B cell (primary cell): ENCODE measurements at regions of chr9 and their contacts with region 1.

Region 1: DNA sequence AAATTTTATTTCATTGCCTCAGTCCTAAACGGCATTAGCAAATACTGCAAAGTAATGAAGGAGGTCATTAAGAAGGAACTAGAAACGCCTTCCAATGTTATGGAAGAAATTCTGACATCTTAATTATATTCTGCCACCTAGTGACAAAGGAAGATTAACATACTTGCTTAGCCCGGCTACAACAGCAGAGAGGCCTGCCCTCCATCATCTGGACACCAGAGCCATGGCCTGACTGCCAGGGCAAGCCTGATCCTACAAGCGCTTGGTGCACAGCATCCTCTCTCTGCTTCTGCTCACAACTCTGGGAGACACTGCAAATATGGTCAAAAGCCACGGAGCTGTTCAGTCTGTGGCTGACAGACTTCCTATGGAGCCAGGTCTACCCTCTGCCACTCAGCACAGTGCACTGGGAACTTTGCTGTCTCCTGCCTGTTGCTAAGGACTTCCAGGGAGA is 87.3 kb upstream of the SLC44A1 start:
- DNase-seq: peak; percentile 59
- ATAC-seq: peak; percentile 63
- H3K4me3 ChIP-seq: no peak overlapping the region
- H3K4me3 Mint-ChIP-seq: no peak overlapping the region
- H3K27ac ChIP-seq: no peak overlapping the region
- H3K27ac Mint-ChIP-seq: no peak overlapping the region
- H3K4me1 ChIP-seq: no peaks in the 10 kb centered on the region
- H3K4me1 Mint-ChIP-seq: peaks cover 3% of the 10 kb centered on the region
- H3K27me3 ChIP-seq: no peaks in the 10 kb centered on the region
- H3K27me3 Mint-ChIP-seq: no peaks in the 10 kb centered on the region
- CTCF ChIP-seq: peak; percentile 56

Region 2: DNA sequence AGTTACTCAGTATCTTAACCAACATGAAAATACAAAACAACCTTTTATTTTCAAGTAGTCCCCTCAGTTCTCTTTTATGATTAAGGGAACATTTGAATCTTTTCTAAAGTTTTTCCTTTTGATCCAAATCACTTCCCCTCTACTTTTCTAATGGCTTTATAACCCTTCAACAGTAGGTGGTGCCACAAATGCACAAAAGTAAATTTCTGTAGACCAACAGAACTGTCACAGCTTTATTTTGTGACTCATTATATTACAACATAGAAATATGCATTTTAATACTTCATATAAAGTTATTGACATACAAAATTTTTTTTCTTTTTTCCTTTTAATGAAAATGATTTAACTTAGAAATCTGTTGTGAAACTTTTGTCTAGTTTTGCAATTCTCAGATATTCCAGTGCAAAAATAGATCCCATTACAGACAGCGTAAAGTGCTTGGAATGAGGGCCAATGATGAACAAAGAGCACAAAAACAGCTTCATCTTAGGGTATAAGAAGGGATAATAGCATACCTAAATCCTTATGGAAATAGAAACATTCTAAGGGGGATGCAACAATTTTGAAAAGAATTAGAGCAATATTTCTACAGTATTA is 376.3 kb before region 1 on chr9:
- CTCF ChIA-PET with region 1: interaction called, 3 read pairs
- POLR2A ChIA-PET with region 1: no interaction called
- intact Hi-C with region 1: loop called (anchors 1 kb)
- DNase-seq: peak; percentile 30
- ATAC-seq: no peak
- H3K4me3 ChIP-seq: no peak overlapping the region
- H3K4me3 Mint-ChIP-seq: no peak overlapping the region
- H3K27ac ChIP-seq: no peak overlapping the region
- H3K27ac Mint-ChIP-seq: peak overlapping the region; percentile 7
- H3K4me1 ChIP-seq: peaks cover 26 to 43% of the 10 kb centered on the region in 2 donors
- H3K4me1 Mint-ChIP-seq: peaks cover 35% of the 10 kb centered on the region
- H3K27me3 ChIP-seq: no peaks in the 10 kb centered on the region
- H3K27me3 Mint-ChIP-seq: no peaks in the 10 kb centered on the region
- CTCF ChIP-seq: peak; percentile 69

Region 3: DNA sequence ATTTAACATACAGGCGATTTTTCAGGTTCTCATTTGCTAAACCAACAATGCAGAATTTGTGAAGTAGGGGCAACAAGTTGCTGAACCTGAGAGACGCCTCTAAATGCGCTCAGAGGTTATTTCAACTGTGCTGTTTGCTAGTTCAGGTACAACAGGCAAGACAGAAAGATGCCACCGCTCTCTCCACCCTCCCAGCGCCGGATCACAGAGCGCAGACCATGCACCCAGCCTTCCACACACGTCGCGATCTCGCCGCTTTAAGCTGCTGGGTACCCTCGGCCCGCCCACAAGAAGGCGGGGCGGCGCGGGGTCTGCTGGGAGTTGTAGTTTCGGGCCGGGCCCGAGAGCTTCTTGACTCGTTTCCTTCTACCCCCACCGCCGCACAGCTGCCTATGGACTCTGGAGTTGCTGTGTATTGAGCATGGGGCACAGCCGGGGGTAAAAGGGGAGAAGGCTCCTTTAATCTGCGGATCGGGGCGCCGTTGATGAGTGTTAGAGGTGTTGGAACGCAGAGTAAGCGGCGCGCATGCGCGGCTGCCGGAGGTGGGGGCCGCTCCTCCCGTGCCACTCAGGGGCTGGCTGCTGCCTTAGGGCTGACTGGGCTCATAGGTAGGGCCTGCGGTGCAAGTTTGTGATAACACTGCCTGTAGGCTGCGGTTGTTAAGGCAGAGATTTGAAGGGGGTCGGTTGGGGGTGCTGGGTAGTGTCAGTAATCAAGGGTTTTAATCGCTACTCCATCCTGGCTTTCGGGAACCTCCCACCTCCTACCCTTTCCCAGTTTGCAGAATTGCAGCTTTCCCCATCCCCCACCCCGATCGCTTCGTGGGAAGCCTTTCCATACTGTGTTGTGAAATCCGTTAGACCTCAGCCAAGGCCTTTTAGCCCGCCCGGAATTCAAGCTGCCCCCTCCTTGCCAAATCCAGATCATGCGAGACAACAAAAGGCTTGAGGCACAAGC is 188.9 kb before region 1 on chr9:
- CTCF ChIA-PET with region 1: interaction called, 5 read pairs
- POLR2A ChIA-PET with region 1: no interaction called
- intact Hi-C with region 1: loop called (anchors 1 kb)
- DNase-seq: peak; percentile 92
- ATAC-seq: peak; percentile 99
- H3K4me3 ChIP-seq: peak overlapping the region; percentile 68 to 86 (median 78)
- H3K4me3 Mint-ChIP-seq: peak overlapping the region; percentile 91
- H3K27ac ChIP-seq: no peak overlapping the region
- H3K27ac Mint-ChIP-seq: peak overlapping the region; percentile 71
- H3K4me1 ChIP-seq: peaks cover 4 to 14% of the 10 kb centered on the region in 2 donors
- H3K4me1 Mint-ChIP-seq: peaks cover 10% of the 10 kb centered on the region
- H3K27me3 ChIP-seq: peaks cover 0 to 4% (median 2%) of the 10 kb centered on the region in 4 experiments
- H3K27me3 Mint-ChIP-seq: peaks cover 21% of the 10 kb centered on the region
- CTCF ChIP-seq: no peak